Right ventricle myocardium superior (tissue), 1 donor: ENCODE measurements at regions of chr1 and their contacts with region 1.

Region 1: DNA sequence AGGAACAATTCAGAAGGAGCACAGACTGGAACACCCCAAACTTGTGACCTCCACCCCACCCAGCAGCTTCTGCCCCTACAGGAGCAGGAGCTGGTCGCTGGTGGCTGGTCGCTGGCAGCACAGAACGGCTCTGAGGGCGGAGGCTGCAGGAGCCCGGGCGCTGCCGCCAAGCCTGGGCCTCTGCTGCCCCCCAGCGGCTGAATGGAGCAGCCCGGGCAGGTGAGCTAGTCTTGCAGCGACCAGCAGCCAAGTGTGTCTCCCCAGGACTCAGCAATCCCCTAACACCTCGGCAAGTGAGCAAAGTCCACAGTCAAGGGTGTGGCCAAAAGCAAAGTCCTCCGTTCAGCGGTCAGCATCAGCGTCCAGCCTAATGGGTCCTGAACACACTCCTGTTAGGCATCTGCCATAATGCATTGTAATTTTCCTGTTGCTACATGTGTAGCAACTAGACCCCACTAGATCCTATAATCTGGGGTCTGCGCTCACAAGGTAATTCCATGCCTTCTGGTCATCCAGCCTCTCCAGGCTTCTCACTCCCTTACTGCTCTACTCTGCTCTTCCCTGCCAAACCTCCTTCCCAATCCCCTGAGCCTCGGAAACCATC is 12.1 kb upstream of the GJB5 start:
- DNase-seq: peak; percentile 85
- ATAC-seq: peak; percentile 95

Region 2: GRCh38 chr1:33633019-33633801 is 1109.6 kb before region 1 on chr1:
- intact Hi-C with region 1: loop called (anchors 5 kb)
- DNase-seq: peak; percentile 89
- ATAC-seq: peak; percentile 92

Region 3: GRCh38 chr1:34460193-34460592 is 282.6 kb before region 1 on chr1:
- intact Hi-C with region 1: loop called (anchors 5 kb)
- DNase-seq: peak; percentile 42
- ATAC-seq: peak; percentile 27